ENCODE measurements at regions of chr16 and their contacts with region 1.

Region 1: GRCh38 chr16:26087091-26087490 is 395.3 kb downstream of the HS3ST4 start:
- DNase-seq: no peak
- H3K4me3 ChIP-seq: no peak overlapping the region
- H3K27ac ChIP-seq: no peak overlapping the region
- H3K4me1 ChIP-seq: no peaks in the 10 kb centered on the region
- H3K27me3 ChIP-seq: no peaks in the 10 kb centered on the region
- CTCF ChIP-seq: no peak
- EP300 ChIP-seq: no peak
- POLR2A ChIP-seq: no peak

Region 2: DNA sequence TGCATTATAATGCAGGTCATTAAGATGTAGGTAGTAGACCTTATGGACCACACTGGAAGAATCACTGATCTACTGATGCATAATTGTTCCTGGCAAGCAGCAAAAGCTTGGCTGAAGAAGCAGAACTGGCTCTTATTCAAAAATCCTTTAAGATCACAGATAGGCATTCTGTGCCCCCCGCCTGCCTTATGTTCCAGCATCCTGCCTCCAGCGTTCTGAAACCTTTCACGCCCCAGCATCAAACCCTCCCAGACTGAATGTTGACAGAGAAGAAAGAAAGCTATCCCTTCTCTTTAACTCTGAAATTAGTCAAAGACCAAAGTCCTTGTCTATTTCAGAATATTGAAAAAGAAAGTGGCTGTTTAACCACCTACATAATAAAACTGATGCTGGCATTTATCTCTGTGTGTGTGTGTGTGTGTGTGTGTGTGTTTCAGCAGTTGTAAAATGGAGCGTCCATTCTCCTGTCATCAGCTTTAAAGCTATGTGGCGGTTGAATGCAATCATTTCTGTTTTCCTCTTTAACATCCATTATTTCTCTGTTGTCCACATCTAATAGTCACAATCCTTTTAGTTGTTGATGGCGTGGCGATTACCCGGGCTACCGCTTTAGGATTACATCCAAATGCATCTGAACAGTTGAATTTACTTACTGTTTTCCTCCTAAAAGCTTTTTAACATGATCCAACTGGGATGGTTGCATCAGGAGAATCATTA is 45.0 kb before region 1 on chr16:
- in situ Hi-C with region 1: no loop called
- intact Hi-C with region 1: no loop called
- DNase-seq: no peak
- H3K4me3 ChIP-seq: no peak overlapping the region
- H3K27ac ChIP-seq: no peak overlapping the region
- H3K4me1 ChIP-seq: no peaks in the 10 kb centered on the region
- H3K27me3 ChIP-seq: no peaks in the 10 kb centered on the region
- CTCF ChIP-seq: no peak
- EP300 ChIP-seq: no peak
- POLR2A ChIP-seq: no peak

Region 3: GRCh38 chr16:26149364-26150190 is 62.5 kb after region 1 on chr16:
- in situ Hi-C with region 1: no loop called
- intact Hi-C with region 1: loop called (anchors 2 kb)
- DNase-seq: no peak
- H3K4me3 ChIP-seq: no peak overlapping the region
- H3K27ac ChIP-seq: no peak overlapping the region
- H3K4me1 ChIP-seq: no peaks in the 10 kb centered on the region
- H3K27me3 ChIP-seq: no peaks in the 10 kb centered on the region
- CTCF ChIP-seq: no peak
- EP300 ChIP-seq: no peak
- POLR2A ChIP-seq: no peak